CD4-positive, alpha-beta memory T cell (primary cell): ENCODE measurements at regions of chr2 and their contacts with region 1.

Region 1: DNA sequence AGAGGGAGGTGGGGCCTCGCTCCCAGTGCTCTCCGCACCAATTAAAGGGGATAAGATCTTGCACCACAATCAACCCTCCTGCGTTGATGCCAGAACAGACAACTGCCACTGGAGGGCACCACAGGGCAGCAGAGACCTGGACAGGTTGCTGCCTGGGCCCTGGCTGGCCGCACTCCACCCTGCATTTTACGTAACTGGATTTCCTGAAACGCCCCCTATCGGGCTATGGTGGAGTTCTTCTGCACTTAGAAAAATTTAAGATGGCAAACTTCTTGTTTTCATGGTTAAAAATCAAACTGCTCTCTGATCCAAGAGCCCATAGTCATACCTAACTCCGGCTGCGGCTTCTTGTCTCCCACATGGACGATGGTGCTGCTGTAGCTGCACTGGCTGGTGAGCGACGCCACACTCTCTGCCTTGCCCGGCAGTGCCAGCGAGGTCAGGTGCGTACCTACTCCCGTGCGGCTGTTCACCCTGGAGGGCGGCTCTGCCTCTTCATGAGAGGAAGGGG is 16.8 kb upstream of the HES6 start:
- DNase-seq: peak; percentile 71 to 82 (median 76)
- H3K4me3 ChIP-seq: no peak overlapping the region
- H3K4me3 Mint-ChIP-seq: no peak overlapping the region
- H3K27ac ChIP-seq: no peak overlapping the region
- H3K27ac Mint-ChIP-seq: peak overlapping the region in 5 of 7 donors; percentile 37 to 78 (median 53)
- H3K4me1 ChIP-seq: no peaks in the 10 kb centered on the region
- H3K4me1 Mint-ChIP-seq: peaks cover 0 to 17% (median 5%) of the 10 kb centered on the region in 4 donors
- H3K27me3 ChIP-seq: no peaks in the 10 kb centered on the region
- H3K27me3 Mint-ChIP-seq: no peaks in the 10 kb centered on the region

Region 2: DNA sequence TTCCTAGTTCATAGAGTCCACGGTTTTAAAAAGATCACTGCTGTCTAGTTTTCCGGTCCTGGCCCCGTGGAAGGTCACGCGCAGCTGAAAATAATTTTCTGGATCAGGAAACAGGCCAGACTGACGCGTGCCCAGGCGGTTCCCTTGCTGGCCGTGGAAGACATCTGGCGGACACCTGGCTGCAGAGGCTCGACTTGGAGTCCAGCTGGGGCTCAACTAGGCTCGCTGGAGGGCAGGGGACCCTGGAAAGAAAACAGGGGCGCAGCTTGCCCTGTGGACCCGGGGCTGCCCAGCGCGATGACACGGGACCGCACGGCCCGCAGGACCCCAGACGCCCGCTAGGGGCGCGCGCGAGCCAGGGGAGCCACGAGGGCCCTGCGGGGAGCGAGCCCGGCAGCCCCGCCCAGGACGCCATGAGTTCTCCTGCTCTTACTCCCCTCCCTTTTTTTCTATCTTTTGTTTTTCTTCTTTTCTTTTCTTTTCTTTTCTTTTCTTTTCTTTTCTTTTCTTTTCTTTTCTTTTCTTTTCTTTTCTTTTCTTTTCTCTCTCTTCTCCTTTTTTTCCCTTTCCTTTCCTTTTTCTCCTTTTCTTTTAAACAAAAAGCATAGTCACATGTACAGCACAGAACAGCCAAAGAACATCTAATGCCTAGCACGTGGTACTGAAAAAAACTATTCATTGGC is 333.0 kb before region 1 on chr2:
- CTCF ChIA-PET with region 1: interaction called, 3 read pairs
- POLR2A ChIA-PET with region 1: no interaction called
- intact Hi-C with region 1: loop called (anchors 1 kb)
- DNase-seq: peak; percentile 63 to 77 (median 75)
- H3K4me3 ChIP-seq: peak overlapping the region in 1 of 2 donors; percentile 35
- H3K4me3 Mint-ChIP-seq: peak overlapping the region; percentile 57 to 83 (median 66)
- H3K27ac ChIP-seq: no peak overlapping the region
- H3K27ac Mint-ChIP-seq: peak overlapping the region in 4 of 7 donors; percentile 7 to 65 (median 58)
- H3K4me1 ChIP-seq: peaks cover 16% of the 10 kb centered on the region
- H3K4me1 Mint-ChIP-seq: peaks cover 17 to 30% (median 22%) of the 10 kb centered on the region in 4 donors
- H3K27me3 ChIP-seq: no peaks in the 10 kb centered on the region
- H3K27me3 Mint-ChIP-seq: no peaks in the 10 kb centered on the region